ENCODE measurements at regions of chr12 and their contacts with region 1.

Region 1: GRCh38 chr12:98644711-98645402 is at the starts of genes APAF1 and IKBIP:
- DNase-seq: peak; percentile 97
- H3K4me3 Mint-ChIP-seq: peak within 1 kb of the TSS; percentile 96
- H3K27ac Mint-ChIP-seq: peak within 1 kb of the TSS; percentile 95
- H3K4me1 Mint-ChIP-seq: peaks cover 24% of the 10 kb centered on the region
- H3K27me3 Mint-ChIP-seq: no peaks in the 10 kb centered on the region
- total RNA-seq, gene APAF1: 13.6 to 14.5 TPM
- total RNA-seq, gene IKBIP: 14.5 to 16.8 TPM

Region 2: DNA sequence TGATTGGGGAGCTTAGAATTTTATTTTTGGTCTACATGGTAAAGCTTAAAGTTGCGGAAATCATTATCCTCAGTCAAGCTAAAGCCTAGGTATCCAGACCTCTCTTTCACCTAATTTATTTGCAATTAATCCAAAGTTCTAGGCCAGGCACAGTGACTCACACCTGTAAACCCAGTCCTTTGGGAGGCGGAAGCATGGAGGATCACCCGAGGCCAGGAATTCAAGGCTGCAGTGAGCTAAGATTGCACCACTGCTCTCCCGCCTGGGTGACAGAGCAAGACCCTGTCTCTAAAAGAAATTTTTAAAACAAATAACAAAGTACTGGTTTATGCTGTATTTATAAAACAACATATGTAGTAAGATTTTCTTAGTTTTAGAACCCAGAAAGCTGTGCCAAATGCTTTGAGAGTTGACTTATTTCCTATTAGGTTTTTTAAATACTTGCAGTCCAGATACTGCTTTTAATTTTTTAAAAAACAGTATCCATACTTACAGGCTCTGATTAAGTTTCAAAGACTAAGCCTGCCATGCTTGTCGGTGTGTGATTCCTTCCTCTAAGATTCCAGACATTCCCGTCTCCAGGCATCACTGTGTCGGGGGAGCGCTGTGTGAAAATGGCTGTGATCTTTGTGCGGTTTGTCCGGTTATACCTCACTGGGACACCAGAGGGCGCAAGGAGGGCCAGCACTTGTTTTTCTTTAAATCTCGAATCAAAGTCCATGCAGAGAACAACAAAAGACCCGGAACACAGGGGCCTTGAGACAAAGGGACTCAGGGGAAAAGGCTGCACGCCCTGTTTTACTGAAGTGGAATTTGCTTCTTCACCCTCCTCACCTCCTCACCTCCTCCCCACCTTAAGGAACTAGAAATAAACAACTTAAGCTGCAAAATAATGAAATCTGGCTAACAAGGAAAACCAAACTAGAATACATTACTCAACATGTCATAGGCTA is 154.1 kb before region 1 on chr12:
- CTCF ChIA-PET with region 1: interaction called, 3 read pairs
- intact Hi-C with region 1: loop called (anchors 2 kb)
- DNase-seq: peak; percentile 91
- H3K4me3 Mint-ChIP-seq: peak overlapping the region; percentile 59
- H3K27ac Mint-ChIP-seq: peak overlapping the region; percentile 87
- H3K4me1 Mint-ChIP-seq: peaks cover 4% of the 10 kb centered on the region
- H3K27me3 Mint-ChIP-seq: no peaks in the 10 kb centered on the region

Region 3: GRCh38 chr12:98503592-98504367 is 141.1 kb before region 1 on chr12:
- CTCF ChIA-PET with region 1: interaction called, 3 read pairs
- intact Hi-C with region 1: loop called (anchors 1 kb)
- DNase-seq: peak; percentile 97
- H3K4me3 Mint-ChIP-seq: peak overlapping the region; percentile 97
- H3K27ac Mint-ChIP-seq: peak overlapping the region; percentile 100
- H3K4me1 Mint-ChIP-seq: peaks cover 16% of the 10 kb centered on the region
- H3K27me3 Mint-ChIP-seq: peaks cover 8% of the 10 kb centered on the region

Region 4: DNA sequence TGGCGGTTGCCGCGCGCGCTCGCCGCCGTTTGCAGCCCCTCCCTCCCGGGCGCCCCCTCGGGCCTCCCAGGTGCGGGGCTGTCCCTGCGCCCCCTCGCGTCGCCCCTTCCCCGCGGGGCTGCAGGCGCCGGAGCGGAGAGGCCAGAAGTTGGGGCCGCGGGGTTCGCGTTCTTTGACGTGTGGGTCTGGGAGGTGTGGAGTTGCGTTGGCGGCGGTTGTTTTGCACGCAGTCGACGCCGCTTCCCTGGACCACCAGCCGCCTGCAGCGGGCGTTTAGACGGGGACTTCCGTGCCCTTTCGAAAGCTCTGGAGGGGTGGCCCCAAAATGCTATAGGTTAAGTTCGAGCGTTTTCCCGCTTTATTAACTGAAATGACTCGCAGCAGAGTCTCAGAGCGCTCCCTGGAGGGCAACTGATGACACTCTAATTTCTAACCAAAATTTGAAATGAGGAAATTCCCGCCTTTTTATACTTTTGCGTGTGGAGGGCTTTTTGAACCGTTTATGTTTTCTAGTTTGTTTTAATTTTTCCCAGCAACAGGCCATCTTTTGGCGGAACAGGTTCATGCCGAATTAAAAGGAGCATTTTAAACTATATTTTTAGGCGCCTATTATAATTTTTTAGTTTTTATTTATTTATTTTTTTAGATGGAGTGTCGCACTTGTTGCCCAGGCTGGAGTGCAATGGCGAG is 128.5 kb before region 1 on chr12:
- CTCF ChIA-PET with region 1: interaction called, 3 read pairs
- intact Hi-C with region 1: loop called (anchors 1 kb)
- DNase-seq: peak; percentile 96
- H3K4me3 Mint-ChIP-seq: peak overlapping the region; percentile 92
- H3K27ac Mint-ChIP-seq: peak overlapping the region; percentile 99
- H3K4me1 Mint-ChIP-seq: peaks cover 37% of the 10 kb centered on the region
- H3K27me3 Mint-ChIP-seq: no peaks in the 10 kb centered on the region

Region 5: DNA sequence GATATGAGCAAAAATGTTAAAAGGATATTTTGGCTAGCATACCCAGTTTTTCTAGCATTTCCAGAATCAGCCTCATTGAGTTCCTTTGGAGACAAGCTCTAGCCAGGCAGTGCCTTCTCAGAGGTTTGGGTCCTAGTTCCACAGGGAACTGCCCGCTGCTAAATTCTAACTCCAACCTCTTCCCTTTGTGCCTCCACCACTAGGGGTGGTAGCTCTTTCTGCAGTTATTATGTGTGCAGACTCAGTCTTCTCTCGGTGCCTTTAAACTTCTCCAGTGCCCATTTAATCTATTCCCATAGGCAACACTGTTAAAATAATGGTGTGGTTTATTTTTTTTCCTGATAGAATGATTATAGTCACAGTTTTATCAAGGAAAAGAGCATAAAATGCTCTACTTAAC is 72.8 kb before region 1 on chr12:
- CTCF ChIA-PET with region 1: interaction called, 23 read pairs
- intact Hi-C with region 1: loop called (anchors 2 kb)
- DNase-seq: no peak
- H3K4me3 Mint-ChIP-seq: no peak overlapping the region
- H3K27ac Mint-ChIP-seq: no peak overlapping the region
- H3K4me1 Mint-ChIP-seq: no peaks in the 10 kb centered on the region
- H3K27me3 Mint-ChIP-seq: peaks cover 2% of the 10 kb centered on the region

Region 6: DNA sequence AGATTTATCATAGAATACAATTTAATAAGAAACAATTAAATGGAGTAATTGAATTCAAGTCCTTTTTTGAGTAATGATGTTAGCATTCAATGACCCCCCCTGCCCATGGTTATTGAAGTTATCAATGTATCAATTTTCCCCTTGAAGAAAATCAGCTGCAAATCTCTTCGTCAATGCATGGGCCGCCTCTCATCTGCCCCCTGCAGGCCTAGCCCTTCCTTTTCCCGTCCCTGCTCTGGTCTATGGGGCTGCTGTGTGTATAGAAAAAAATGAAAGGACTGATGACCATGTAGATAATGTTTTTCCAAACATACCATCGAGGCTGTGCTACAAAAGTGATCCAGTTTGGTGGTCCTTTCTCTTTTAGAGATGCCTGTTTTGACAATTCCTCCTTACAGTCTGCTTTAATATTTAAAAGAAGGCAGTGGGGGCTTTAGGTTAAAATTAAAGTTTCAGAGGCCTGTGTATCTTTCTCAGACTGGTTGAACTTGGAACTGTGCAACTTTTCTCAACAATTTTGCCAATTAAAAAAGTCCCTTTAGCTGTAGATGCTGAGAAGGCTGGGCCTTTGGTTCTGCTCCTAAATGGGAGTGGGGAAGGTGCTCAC is 98.6 kb after region 1 on chr12:
- CTCF ChIA-PET with region 1: no interaction called
- intact Hi-C with region 1: loop called (anchors 1 kb)
- DNase-seq: peak; percentile 60
- H3K4me3 Mint-ChIP-seq: no peak overlapping the region
- H3K27ac Mint-ChIP-seq: no peak overlapping the region
- H3K4me1 Mint-ChIP-seq: peaks cover 21% of the 10 kb centered on the region
- H3K27me3 Mint-ChIP-seq: peaks cover 22% of the 10 kb centered on the region

Region 7: GRCh38 chr12:100200463-100201181 is 1555.8 kb after region 1 on chr12 and contains the start of gene ACTR6:
- CTCF ChIA-PET with region 1: no interaction called
- intact Hi-C with region 1: loop called (anchors 1 kb)
- DNase-seq: peak; percentile 98
- H3K4me3 Mint-ChIP-seq: peak within 1 kb of the TSS; percentile 99
- H3K27ac Mint-ChIP-seq: peak within 1 kb of the TSS; percentile 99
- H3K4me1 Mint-ChIP-seq: peaks cover 27% of the 10 kb centered on the region
- H3K27me3 Mint-ChIP-seq: no peaks in the 10 kb centered on the region
- total RNA-seq, gene ACTR6: 38.0 to 41.8 TPM

Measured in activated naive CD4-positive, alpha-beta T cell treated with anti-CD3 and anti-CD28 coated beads for 36 hours (primary cell).